GM13977 (cell line): ENCODE measurements at regions of chr12 and their contacts with region 1.

Region 1: DNA sequence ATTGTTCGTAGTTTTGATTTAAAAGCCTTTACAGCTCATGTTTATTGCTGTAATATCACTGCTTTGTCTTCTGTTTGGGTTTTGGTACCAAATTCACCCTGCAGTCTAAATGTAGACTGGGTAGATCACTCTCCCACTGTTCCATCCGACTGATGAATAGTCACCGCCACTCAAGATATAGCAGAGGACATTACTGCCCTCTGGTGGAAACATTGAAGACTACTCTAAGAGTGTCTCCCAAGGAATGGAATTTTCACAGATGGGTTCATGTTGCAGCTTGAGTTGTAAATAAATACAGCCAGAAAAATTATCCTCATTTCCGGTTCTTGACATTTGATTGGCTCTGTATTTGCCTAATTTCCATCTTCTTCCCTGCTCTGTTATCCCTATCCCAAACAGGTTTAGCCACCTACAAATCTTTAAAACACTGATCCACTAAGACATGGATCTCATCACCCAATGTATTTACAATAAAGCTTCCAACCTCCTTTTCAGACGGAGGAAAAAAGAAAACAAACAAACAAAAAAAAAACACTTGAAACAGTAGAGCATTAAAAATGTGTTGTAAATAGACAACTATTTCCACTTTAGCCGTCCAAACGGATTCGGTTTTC is 198.3 kb upstream of the CPNE8 start:
- DNase-seq: peak; percentile 62
- CTCF ChIP-seq: peak; percentile 81

Region 2: DNA sequence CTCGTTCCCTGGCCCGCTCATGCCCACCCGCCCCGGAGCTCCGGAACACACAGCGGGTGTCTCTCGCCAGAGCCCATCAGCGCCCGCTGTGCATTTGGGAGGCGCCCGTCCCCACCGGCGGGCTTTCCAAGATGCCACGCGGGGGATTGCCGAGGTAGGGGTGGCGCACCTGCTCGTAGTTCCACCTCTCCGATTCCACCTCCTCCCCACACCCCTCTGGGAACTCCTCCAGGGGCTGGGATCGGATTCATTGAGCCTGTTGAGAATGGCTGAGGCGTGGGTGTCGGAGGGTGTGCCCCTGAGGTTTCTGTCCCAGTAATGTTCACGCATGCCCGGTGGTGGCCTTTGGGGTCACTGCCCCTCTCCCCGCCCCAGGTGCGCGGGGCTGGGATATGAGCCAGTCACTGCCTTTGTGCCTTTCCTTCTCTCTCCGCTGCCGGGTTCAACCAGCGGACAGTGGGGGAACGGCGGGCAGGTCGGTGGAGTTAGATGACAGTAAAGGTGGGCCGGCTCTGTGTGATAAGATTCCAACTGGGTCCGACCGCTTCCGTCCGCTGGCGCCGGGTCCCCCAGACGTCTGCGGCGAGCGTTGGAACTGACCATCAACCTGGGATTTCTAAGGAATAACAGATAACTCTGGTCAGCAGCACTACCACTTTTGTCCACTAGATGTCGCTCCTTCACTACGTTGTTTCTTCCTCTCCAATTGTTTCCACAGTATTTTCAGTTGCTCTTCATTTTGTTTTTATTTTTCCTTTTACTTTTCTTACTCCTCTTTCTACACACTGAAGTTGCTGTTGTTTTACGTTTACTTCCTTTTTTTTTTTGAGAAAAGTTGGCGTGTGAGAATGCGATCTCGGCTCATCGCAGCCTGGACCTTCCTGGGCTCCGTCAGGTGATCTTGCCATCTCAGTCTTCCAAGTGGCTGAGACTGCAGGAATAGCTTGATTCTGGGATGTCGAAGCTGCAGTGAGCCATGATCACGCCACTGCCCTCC is 965.1 kb before region 1 on chr12:
- in situ Hi-C with region 1: loop called (anchors 25 kb)
- DNase-seq: peak; percentile 73
- CTCF ChIP-seq: peak; percentile 88

Region 3: DNA sequence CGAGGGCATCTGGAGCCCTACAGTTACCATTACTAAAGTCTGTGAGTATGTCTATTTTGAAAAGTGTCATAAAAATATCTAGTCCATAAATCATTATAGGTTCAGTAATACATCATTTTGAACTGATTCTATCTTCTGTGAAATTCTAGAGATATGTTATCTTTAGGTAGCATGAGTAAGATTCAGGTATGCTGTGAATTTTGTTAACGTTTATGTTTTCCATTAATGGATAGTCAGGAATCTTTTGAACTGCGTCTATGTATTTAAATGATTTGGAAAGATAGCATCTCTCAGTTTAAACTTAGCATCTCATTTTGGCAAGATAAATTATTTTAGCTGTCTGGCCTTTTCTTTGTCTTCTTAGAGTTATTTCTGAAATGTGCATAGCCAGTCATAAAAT is 778.8 kb before region 1 on chr12:
- in situ Hi-C with region 1: loop called (anchors 10 kb)
- DNase-seq: no peak
- CTCF ChIP-seq: no peak

Region 4: GRCh38 chr12:38906482-38907170 is 197.0 kb before region 1 on chr12:
- in situ Hi-C with region 1: loop called (anchors 10 kb)
- DNase-seq: peak; percentile 70
- CTCF ChIP-seq: peak; percentile 94